AG04449 (cell line): ENCODE measurements at regions of chr4 and their contacts with region 1.

Region 1: DNA sequence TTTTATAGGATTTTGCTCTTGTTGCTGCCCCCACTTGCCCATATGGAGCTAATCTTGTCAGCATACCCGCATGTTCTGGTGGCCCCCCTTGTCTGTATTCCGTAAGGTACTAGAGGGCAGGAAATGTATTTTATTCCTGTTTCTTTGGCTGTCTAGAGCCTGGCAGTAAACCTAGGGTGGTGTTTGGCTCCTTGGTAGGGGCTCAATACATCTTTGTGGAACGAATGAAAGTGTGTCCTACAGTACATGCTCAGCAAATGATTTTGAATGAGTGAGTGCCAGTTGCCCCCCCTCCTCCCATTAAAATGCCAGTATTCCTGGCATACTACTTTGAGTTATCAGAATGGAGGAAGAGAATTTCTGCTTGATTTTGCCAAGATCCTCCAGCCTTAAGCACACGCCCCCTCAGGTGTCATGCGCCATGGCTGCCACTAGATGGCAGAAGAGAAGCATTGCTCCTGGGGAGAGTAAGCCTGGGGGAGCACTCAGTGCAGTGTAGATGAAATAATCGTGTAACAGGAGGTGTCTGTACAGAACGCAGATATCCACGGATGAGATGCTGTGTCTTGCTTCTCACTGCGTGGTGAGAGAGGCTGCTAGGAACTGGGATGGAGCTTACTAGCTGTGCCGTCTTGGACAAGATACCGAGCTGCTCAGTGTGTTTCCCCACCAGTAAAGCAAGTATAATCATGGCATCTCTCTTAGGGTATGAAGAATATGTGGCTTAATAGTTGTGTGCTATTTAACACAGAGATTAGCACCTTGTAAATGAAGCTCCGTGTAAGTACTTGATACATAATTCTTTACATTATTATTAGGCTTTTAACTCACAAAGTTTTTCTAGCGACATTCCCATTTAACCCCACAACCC is 17.2 kb upstream of the RNF212 start:
- DNase-seq: no peak
- H3K4me3 ChIP-seq: no peak overlapping the region
- CTCF ChIP-seq: peak; percentile 99

Region 2: DNA sequence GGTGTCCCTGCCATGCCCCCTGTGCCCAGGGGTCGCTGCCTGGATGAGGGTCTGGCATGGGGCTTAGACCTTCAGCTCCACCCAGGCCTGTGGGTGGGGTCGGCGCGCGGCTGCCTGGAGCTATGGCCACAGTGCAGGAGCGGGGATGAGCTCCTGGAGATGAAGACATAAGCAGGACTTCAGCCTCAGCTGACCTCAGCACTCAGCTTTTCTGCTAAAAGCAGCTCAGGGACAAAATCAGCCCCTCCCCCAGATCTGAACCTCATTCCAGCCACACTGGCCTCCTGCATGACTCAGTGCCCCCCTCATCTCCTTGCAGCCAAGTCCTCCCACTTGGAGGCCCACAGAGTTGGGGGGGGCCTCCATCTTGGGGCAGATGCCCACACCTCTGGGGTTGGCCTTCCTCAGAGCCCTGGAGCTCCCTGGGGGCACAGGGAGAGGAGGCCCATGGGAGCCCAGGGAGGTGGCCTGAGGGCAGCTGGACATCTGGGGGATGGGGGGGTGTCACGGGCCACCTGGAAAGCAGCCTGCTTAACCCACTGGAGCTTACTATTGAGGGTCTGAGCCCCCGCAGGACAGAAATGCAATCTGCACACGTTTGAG is 285.2 kb before region 1 on chr4:
- CTCF ChIA-PET with region 1: no interaction called
- POLR2A ChIA-PET with region 1: no interaction called
- DNase-seq: peak; percentile 10
- H3K4me3 ChIP-seq: no peak overlapping the region
- CTCF ChIP-seq: no peak

Region 3: GRCh38 chr4:1043658-1044468 is 86.7 kb before region 1 on chr4:
- CTCF ChIA-PET with region 1: no interaction called
- POLR2A ChIA-PET with region 1: no interaction called
- DNase-seq: peak; percentile 96
- H3K4me3 ChIP-seq: peak overlapping the region; percentile 38
- CTCF ChIP-seq: no peak

Region 4: DNA sequence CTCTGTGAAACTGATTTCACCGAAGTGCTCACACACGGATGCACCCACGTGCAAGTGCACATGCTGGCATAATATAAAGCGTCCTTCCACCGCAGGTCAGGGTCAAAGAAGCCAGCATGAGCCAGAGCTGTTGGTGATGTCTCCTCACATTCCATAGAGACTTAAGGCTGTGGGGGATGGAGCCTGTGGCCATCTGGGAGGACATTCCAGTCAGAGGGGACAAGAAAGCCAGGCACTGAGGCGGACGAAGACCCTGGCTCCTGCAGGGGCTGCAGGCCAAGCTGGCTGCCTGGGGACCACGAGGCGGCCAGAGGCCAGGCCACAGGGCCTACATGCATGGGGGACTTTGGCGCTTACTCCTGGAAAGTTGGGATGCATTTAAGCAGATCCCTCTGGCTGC is 24.9 kb before region 1 on chr4:
- CTCF ChIA-PET with region 1: interaction called, 19 read pairs
- POLR2A ChIA-PET with region 1: no interaction called
- DNase-seq: no peak
- H3K4me3 ChIP-seq: no peak overlapping the region
- CTCF ChIP-seq: no peak

Region 5: DNA sequence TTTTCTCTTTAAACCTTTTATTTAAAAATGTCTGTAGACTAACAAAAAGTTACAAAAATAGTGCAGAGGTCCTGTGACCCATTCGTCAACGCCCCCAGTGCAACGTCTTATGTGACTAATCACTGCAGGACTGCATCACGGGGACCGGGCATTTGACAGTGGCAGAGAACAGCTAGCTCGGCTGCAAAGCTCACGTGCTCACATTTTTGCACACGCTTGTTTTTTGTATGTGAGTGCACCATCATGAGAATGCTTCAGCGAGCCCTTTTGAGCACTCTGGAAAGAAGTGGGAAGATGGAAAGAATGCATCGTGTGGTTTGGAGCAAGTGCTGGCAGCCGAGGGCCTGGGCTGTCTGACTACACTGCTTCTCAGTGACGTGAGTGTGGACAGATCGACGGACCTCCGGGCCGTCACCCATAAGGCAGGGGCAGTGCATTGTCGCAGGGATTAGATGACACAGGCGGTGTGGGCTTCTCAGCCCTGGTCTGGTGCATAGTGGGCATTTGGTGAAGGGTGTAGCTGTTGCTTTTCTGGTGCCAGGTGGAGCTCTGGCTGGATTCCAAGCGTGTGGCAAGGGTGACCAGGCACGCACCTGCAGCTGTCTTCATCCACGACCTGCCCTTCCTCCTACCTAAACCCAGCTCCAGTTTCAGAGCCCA is 24.1 kb after region 1 on chr4:
- CTCF ChIA-PET with region 1: interaction called, 22 read pairs
- POLR2A ChIA-PET with region 1: no interaction called
- DNase-seq: no peak
- H3K4me3 ChIP-seq: no peak overlapping the region
- CTCF ChIP-seq: no peak

Region 6: DNA sequence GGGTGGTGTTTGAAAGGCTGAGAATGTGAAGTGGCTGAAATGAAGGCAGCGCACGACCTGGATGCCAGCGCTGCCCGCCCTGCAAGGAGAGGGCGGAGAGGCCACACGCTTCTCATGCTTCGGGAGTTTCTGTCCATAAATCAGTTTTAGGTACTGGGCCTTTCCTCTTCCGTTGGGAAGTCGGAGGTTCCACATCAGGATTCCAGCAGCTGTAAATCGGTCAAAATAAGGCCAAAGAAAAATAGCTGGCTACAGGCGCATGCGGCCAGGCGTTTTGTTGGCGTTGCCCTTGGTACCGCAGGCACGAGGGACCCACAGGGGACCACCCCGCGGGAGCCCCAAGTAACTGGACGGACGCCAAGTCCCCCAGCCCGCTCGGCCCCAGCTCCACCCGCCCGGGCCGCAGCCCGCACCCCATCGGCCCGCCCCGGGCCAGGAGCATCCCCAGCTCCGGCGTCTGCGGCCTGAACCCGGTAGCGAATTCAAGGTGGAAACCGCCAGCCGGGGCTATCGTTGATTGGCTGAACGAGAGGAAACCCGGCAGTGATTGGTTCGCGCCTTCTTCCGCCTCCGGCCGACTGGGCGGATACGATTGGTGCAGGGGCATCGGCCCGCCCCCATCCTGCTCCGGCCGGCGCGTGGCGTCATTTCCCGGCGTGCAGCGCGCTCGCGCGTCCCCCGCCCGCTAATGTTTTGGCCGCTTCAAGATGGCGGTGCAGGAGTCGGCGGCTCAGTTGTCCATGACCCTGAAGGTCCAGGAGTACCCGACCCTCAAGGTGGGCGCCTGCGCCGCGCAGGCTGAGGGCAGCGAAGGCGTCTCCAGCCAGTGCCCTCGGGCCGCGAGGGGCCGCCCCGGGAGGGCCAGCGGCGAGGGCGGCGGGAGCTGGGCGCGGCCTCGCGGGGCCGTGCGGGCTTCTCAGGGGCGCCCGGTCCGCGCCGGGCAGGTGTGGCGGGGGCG is 158.9 kb after region 1 on chr4 and contains the start of gene MAEA:
- CTCF ChIA-PET with region 1: interaction called, 18 read pairs
- POLR2A ChIA-PET with region 1: no interaction called
- DNase-seq: peak; percentile 63
- H3K4me3 ChIP-seq: peak within 1 kb of the TSS; percentile 79
- CTCF ChIP-seq: no peak

Region 7: DNA sequence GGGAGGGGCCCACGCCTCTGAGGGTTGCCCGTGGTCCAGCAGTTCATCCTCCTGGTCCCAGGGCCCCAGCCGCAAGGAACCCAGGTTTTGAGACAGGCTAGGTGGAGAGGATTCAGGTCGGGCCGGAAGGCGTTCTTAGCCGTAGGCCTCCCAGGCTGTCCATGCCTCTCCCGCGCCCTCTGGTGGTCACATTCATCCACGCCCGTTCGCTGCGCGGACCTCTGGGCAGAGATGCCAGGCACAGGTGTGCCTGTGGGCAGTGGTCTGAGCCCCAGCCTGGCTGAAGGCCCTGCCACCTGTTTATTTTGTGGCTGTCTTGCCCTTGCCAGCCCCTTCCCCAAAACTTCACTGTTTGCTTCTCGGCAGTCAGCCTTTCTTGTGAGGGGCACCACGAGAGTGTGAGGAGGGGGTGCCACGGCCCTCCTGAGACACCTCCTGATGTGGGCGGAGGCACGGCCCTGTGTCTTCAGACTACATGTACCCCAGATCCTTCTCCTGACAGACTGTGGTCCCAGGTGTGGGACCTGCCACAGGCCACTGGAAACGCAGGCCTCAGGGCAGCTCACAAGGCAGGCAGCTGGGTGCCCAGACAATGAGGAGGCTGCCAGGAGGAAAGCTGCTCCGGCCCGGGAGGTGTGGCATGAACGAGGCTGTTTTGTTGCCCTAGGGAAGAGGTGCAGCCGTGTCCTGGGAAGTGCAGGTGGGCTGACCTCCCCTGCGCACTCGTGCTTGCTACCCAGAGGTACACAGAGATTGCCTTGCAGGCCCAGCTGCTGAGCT is 221.5 kb after region 1 on chr4:
- CTCF ChIA-PET with region 1: interaction called, 59 read pairs
- POLR2A ChIA-PET with region 1: no interaction called
- DNase-seq: no peak
- H3K4me3 ChIP-seq: no peak overlapping the region
- CTCF ChIP-seq: peak; percentile 96

Region 8: GRCh38 chr4:1384675-1385372 is 254.3 kb after region 1 on chr4:
- CTCF ChIA-PET with region 1: no interaction called
- POLR2A ChIA-PET with region 1: no interaction called
- DNase-seq: no peak
- H3K4me3 ChIP-seq: no peak overlapping the region
- CTCF ChIP-seq: no peak